Activated naive CD4-positive, alpha-beta T cell treated with anti-CD3 and anti-CD28 coated beads for 36 hours (primary cell): ENCODE measurements at regions of chr5 and their contacts with region 1.

Region 1: DNA sequence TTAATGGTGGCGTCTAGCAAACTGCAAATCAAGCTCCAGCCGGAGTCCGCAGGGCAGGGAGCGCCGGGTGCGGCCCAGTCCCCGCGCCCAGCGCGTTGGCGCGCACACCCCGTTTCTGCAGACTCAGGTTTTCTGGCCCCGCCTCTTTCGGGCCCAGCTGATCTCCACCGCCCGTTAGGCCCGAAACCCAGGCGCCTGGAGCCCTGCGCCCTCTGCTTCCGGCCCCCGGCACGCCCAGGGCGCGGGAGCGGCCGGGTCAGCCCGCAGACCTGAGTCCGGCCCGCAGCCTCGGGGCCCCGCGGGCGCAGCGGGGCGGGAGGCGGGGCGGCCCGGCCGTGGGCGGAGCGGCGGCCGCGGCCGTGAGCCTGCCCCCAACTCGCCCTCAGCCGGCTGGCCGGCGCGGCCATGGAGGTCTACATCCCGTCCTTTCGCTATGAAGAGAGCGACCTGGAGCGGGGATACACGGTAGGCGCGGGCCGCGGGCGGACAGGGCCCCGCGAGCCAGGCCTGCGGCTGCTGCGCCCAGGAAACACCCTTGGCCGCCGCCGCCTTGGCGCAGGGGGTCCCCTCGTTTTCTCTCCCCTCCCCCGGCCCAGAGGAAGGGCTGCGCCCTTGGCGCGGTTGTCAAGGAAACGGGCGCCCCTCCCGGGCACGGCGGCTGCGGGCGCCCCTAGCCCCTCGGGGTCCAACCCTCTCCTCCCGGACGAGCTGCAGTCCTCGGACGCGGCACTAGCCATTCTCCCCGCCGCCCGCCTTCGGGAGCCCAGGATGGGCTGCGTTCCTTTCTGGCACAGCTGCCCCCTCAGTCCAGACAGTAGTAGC is at the start of gene SNX24:
- DNase-seq: peak; percentile 70
- H3K4me3 Mint-ChIP-seq: peak within 1 kb of the TSS; percentile 79
- H3K27ac Mint-ChIP-seq: no peak within 1 kb of the TSS
- H3K4me1 Mint-ChIP-seq: peaks cover 16% of the 10 kb centered on the region
- H3K27me3 Mint-ChIP-seq: peaks cover 5% of the 10 kb centered on the region
- total RNA-seq, gene SNX24: 2.2 to 2.3 TPM

Region 2: DNA sequence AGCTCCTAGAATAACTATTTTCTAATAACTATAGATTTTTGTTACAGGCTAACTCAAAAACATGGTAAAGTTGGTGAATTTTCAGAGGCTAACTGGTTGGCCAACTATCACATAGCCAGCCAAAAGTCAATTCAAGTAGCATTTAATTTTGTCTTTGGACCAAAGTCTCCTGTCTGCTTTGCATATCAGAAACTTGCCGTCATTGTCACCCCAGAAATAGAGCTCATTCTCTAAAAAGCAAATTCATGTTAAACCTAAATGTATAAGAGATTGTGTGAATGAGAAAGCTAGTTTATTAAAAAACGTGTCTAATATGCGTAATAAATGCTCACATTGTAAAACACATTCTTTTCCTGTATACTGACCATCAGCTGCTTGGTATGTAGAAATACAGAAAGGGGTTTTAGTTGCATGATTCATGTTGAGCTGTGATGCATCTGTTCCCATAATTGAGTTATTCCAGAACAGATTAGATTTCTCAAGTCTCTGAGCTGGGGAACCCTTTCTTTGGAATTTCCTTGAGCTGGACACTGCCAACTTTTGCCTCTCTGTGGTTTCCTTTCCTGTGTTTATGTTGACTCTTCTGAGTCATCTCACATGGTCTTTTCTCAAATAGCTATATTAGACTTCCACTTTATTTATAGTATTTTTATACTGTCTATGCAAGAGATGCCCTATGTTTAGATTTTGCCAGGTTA is 876.4 kb before region 1 on chr5:
- CTCF ChIA-PET with region 1: no interaction called
- intact Hi-C with region 1: loop called (anchors 10 kb)
- DNase-seq: no peak
- H3K4me3 Mint-ChIP-seq: no peak overlapping the region
- H3K27ac Mint-ChIP-seq: no peak overlapping the region
- H3K4me1 Mint-ChIP-seq: peaks cover 37% of the 10 kb centered on the region
- H3K27me3 Mint-ChIP-seq: no peaks in the 10 kb centered on the region

Region 3: GRCh38 chr5:122704243-122705036 is 141.0 kb before region 1 on chr5:
- CTCF ChIA-PET with region 1: interaction called, 3 read pairs
- intact Hi-C with region 1: loop called (anchors 2 kb)
- DNase-seq: no peak
- H3K4me3 Mint-ChIP-seq: no peak overlapping the region
- H3K27ac Mint-ChIP-seq: no peak overlapping the region
- H3K4me1 Mint-ChIP-seq: peaks cover 4% of the 10 kb centered on the region
- H3K27me3 Mint-ChIP-seq: peaks cover 3% of the 10 kb centered on the region

Region 4: DNA sequence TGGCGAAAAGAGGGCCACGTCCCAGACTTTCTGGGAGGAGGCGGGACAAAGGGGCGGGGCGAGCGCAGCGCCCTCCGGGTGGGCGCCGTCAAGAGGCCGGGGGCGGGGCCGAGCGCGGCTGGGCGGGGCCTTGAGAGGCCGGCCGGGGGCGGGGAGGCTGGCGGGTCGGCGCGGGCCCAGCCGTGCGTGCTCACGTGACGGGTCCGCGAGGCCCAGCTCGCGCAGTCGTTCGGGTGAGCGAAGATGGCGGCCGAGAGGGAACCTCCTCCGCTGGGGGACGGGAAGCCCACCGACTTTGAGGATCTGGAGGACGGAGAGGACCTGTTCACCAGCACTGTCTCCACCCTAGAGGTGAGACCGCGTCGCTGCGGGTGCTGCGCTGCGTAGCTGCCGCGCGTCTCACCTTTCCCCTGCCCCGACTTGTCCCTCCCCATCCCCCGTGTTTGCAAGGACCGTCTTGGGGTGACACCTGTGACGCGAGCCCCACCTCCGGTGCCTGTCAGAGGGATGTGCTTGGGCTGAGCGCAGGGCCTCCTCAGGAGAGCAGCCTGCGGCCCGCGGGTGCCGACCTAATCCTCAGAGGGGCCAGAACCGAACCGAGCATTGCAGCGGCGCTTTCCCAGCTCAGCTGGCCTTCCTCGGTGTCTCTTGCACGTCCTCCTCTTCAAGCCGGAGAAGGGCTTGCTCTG is 70.4 kb before region 1 on chr5 and contains the start of gene SNX2:
- CTCF ChIA-PET with region 1: no interaction called
- intact Hi-C with region 1: loop called (anchors 1 kb)
- DNase-seq: peak; percentile 89
- H3K4me3 Mint-ChIP-seq: peak within 1 kb of the TSS; percentile 89
- H3K27ac Mint-ChIP-seq: peak within 1 kb of the TSS; percentile 78
- H3K4me1 Mint-ChIP-seq: peaks cover 24% of the 10 kb centered on the region
- H3K27me3 Mint-ChIP-seq: no peaks in the 10 kb centered on the region
- total RNA-seq, gene SNX2: 47.3 to 48.0 TPM

Region 5: DNA sequence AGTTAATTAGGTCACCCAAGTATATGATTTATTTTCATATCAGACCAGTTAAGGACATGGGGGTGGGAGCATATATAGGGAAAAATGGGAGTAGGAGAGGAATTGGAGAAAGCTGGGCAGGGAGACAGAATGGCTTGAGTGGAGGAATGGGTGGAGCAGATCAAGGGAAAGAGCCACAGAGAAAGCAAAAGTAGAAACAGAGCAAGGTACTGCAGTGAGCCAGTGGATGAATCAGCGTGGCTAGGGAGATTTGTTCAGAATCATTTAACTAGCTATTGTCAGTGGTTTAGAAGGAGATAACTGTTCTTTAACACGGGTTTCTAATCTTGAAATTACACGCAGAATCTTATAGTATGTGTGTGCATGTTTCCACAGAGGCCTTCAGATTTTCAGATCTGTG is 37.4 kb after region 1 on chr5:
- CTCF ChIA-PET with region 1: no interaction called
- intact Hi-C with region 1: loop called (anchors 2 kb)
- DNase-seq: peak; percentile 10
- H3K4me3 Mint-ChIP-seq: no peak overlapping the region
- H3K27ac Mint-ChIP-seq: no peak overlapping the region
- H3K4me1 Mint-ChIP-seq: no peaks in the 10 kb centered on the region
- H3K27me3 Mint-ChIP-seq: no peaks in the 10 kb centered on the region

Region 6: DNA sequence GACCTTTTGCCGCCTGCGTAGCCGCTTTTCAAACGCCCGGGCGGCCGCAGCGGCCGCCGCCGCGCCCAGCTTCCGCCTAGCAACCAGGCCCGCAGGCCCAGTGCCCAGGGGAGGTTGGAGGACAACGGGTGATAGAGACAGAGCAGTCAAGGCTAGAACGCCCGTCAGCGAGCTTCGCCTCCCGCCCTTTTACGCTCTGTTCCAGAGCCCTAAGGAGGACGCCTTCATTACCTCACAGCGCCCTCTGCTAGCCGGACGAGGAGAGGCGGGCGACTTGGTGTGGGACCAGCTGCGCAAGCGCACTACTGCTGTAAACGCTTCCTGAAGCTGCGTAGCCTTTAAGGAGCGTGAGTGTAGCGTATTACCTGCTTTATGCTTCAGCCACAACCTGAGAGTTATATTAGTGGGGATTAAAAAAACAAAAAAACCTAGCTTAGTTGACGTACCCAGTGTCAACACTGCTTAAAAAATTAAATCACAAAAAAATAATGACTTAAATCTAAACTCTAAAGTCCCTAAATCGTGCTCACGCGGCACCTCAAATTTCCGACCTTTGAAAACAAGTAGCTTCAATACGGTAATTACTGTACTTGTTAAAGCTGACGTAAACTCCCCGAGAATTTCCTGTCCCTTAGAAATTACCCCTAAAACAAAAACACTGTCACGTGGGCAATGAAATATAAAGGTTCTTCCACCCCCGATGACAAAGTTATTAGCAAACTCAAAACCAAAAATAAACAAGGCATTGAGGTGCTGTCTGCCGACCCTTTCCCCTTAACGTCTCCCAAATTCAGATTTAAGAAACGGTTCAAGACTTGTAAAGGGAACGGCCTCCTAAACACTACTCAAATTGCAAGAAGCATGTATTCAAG is 578.1 kb after region 1 on chr5 and contains the start of gene CEP120:
- CTCF ChIA-PET with region 1: no interaction called
- intact Hi-C with region 1: loop called (anchors 5 kb)
- DNase-seq: peak; percentile 98
- H3K4me3 Mint-ChIP-seq: no peak within 1 kb of the TSS
- H3K27ac Mint-ChIP-seq: no peak within 1 kb of the TSS
- H3K4me1 Mint-ChIP-seq: peaks cover 21% of the 10 kb centered on the region
- H3K27me3 Mint-ChIP-seq: no peaks in the 10 kb centered on the region
- total RNA-seq, gene CEP120: 39.2 to 39.5 TPM